ENCODE measurements at regions of chr19 and their contacts with region 1.

Region 1: GRCh38 chr19:52993323-52994178 is 20.2 kb upstream of the ERVV-1 start:
- DNase-seq: peak; percentile 76
- H3K4me3 ChIP-seq: peak overlapping the region; percentile 51 to 71 (median 64)
- H3K27ac ChIP-seq: peak overlapping the region; percentile 81
- H3K4me1 ChIP-seq: peaks cover 20% of the 10 kb centered on the region
- H3K27me3 ChIP-seq: no peaks in the 10 kb centered on the region
- CTCF ChIP-seq: peak in 1 of 2 donors; percentile 59
- POLR2A ChIP-seq: peak; percentile 69

Region 2: GRCh38 chr19:52690369-52691214 is 303.0 kb before region 1 on chr19:
- CTCF ChIA-PET with region 1: no interaction called
- POLR2A ChIA-PET with region 1: no interaction called
- dilution Hi-C with region 1: no loop called
- intact Hi-C with region 1: loop called (anchors 2 kb)
- DNase-seq: peak; percentile 94
- H3K4me3 ChIP-seq: peak overlapping the region; percentile 88 to 97 (median 93)
- H3K27ac ChIP-seq: peak overlapping the region; percentile 88
- H3K4me1 ChIP-seq: peaks cover 9% of the 10 kb centered on the region
- H3K27me3 ChIP-seq: no peaks in the 10 kb centered on the region
- CTCF ChIP-seq: peak in 1 of 2 donors; percentile 5
- POLR2A ChIP-seq: peak; percentile 89

Region 3: DNA sequence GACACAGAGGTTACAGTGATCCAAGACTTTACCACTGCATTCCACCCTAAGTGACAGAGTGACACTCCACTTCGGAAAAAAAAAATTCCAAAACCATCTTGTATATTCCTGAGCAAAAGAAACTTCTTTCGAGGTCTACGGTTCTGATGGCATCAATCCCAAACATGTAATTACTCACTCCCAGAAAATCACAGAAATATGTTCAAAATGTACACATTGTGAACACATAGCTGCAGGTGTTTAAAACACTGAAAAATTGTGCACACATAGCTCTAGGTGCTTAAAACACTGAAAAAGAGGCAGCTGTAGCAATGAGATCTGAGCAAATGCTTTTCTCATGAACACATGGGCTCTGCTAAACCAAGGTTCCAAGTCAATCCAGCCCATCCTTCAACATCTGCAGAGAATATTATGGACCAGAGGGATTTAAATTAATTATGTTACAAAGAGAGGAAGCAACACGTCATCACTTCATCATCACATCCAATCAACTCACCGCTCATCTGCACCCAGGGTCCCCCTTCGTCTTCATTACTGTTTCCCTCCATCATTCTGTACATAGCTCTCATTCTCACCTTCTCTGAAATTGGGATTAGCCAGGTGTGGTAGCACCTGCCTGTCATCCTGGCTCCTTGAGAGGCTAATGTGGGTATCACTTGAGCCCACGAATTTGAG is 122.0 kb before region 1 on chr19:
- CTCF ChIA-PET with region 1: no interaction called
- POLR2A ChIA-PET with region 1: no interaction called
- dilution Hi-C with region 1: no loop called
- intact Hi-C with region 1: no loop called
- DNase-seq: no peak
- H3K4me3 ChIP-seq: no peak overlapping the region
- H3K27ac ChIP-seq: no peak overlapping the region
- H3K4me1 ChIP-seq: no peaks in the 10 kb centered on the region
- H3K27me3 ChIP-seq: no peaks in the 10 kb centered on the region
- CTCF ChIP-seq: no peak
- POLR2A ChIP-seq: no peak

Region 4: DNA sequence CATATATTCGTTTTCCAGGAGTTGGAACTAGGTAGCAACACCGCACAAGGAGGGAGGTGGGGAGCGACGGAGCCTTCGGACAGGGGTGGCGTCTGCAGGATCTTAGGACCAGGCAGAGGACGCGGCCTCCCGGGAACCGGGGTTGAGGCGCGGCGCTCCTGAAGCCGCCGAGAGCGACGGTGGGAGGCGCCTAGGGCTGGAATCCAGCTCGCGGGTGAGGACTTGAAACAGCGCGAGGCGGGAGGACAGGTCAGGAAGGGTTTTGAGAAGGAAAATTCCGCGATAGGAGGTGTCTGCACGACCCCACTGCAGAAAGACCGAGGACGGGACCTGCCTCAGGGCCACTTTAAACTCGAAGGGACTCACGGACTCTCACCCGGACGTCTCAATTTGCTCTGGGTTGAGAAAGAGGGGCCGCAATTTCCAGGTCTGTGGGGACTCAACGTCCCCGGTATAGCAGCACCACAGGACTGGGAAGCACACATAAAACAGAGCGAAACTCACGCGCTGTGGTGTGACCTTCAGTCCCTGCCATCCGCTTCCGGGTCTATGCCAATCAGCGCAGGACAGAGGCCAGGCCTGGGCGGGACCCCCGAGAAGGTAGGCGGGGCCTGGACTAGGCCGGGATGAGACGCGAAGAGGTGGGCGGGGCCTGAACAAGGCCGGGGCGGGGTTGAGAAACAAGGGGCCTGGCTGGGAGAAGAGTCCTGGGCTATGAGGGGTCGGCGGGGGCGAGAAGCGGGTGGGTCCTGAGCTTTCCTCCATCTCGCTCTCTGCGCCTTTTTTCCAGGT is 96.2 kb before region 1 on chr19 and contains the start of gene ZNF320:
- CTCF ChIA-PET with region 1: no interaction called
- POLR2A ChIA-PET with region 1: no interaction called
- dilution Hi-C with region 1: no loop called
- intact Hi-C with region 1: loop called (anchors 1 kb)
- DNase-seq: peak; percentile 96
- H3K4me3 ChIP-seq: peak within 1 kb of the TSS; percentile 83 to 99 (median 97)
- H3K27ac ChIP-seq: peak within 1 kb of the TSS; percentile 89
- H3K4me1 ChIP-seq: peaks cover 6% of the 10 kb centered on the region
- H3K27me3 ChIP-seq: no peaks in the 10 kb centered on the region
- CTCF ChIP-seq: no peak
- POLR2A ChIP-seq: peak; percentile 69
- total RNA-seq, gene ZNF320: 10.9 and 11.1 TPM in 2 replicates

Region 5: DNA sequence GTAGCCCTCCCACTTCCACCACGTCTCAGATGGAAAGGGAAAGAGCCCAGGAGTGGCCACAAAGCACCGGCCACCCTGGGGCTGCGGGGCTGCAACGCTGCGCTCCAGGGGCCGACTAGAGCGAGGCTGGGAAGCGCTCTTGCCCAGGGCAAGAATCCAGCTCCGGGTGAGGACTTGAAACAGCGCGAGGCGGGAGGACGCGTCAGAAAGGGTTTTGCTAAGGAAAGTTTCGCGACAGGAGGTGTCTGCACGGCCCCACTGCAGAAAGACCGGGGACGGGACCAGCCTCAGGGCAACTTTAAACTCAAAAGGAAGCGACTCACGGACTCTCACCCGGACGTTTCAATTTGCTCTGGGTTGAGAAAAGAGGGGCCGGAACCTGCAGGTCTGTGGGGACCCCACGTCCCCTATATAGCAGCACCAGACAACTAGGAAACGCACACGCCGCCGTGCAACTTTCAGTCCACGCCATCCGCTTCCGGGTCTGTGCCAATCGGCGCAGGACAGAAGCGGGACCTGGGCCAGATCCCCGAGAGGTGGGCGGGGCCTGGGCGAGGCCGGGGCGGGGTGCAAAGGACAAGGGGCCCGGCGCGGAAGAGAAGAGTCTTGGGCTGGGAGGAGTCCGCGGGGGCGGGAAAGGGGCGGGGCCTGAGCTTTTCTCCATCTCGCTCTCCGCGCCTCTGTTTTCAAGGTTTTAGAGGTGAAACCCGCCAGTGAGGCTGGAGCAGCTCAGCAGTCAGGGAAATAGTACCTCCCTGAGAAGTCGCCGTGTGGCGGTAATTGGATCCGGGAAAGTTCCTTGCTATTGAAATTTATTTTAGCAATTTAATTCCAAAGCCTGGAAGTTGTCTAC is 30.9 kb before region 1 on chr19 and contains the start of gene ZNF816:
- CTCF ChIA-PET with region 1: interaction called, 4 read pairs
- POLR2A ChIA-PET with region 1: no interaction called
- dilution Hi-C with region 1: no loop called
- intact Hi-C with region 1: loop called (anchors 1 kb)
- DNase-seq: peak; percentile 96
- H3K4me3 ChIP-seq: peak within 1 kb of the TSS; percentile 74 to 83 (median 77)
- H3K27ac ChIP-seq: peak within 1 kb of the TSS; percentile 56
- H3K4me1 ChIP-seq: peaks cover 4% of the 10 kb centered on the region
- H3K27me3 ChIP-seq: no peaks in the 10 kb centered on the region
- CTCF ChIP-seq: no peak
- POLR2A ChIP-seq: peak; percentile 87
- total RNA-seq, gene ZNF816: 4.9 and 5.3 TPM in 2 replicates

Region 6: GRCh38 chr19:53037101-53038097 is 43.8 kb after region 1 on chr19:
- CTCF ChIA-PET with region 1: no interaction called
- POLR2A ChIA-PET with region 1: no interaction called
- dilution Hi-C with region 1: no loop called
- intact Hi-C with region 1: no loop called
- DNase-seq: peak; percentile 42
- H3K4me3 ChIP-seq: peak overlapping the region; percentile 43 to 86 (median 72)
- H3K27ac ChIP-seq: peak overlapping the region; percentile 15
- H3K4me1 ChIP-seq: no peaks in the 10 kb centered on the region
- H3K27me3 ChIP-seq: no peaks in the 10 kb centered on the region
- CTCF ChIP-seq: no peak
- POLR2A ChIP-seq: peak; percentile 50

Region 7: GRCh38 chr19:53103198-53103944 is 109.8 kb after region 1 on chr19 and contains the start of gene ZNF160:
- CTCF ChIA-PET with region 1: no interaction called
- POLR2A ChIA-PET with region 1: no interaction called
- dilution Hi-C with region 1: no loop called
- intact Hi-C with region 1: loop called (anchors 1 kb)
- DNase-seq: peak; percentile 98
- H3K4me3 ChIP-seq: peak within 1 kb of the TSS; percentile 79 to 93 (median 90)
- H3K27ac ChIP-seq: peak within 1 kb of the TSS; percentile 94
- H3K4me1 ChIP-seq: peaks cover 11% of the 10 kb centered on the region
- H3K27me3 ChIP-seq: no peaks in the 10 kb centered on the region
- CTCF ChIP-seq: no peak
- POLR2A ChIP-seq: peak; percentile 72
- total RNA-seq, gene ZNF160: 16.4 and 19.7 TPM in 2 replicates

Measured in endothelial cell of umbilical vein (primary cell).